Dorsolateral prefrontal cortex (tissue), 120 donors: ENCODE measurements at regions of chr2 and their contacts with region 1.

Region 1: DNA sequence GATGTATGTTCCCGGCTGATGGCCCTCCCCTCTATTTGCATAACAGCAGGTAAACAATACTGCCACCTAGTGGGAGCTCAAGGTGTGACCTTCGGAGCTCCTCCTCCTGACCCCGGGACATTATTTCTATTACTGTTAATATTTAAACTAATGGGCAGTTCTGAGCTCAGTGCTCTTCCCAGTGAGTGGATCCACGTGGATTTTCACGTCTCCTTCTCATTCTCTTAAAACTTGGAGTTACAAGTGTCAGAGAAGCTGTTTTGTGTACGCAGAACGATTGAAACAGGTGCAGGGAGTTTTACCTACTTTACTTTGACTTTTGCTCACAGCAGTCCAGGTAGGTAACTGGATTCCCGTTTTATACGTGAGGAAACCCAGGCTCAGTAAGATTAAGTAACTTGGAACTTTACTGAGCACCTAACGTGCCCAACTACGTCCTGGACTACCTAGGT is 127.3 kb downstream of the PRKCE start:
- DNase-seq: peak in 4 of 10 donors; percentile 43 to 68 (median 62)
- H3K4me3 ChIP-seq: peak overlapping the region in 7 of 59 donors; percentile 6 to 36 (median 22)
- H3K27ac ChIP-seq: no peak overlapping the region
- H3K27me3 ChIP-seq: no peaks in the 10 kb centered on the region
- CTCF ChIP-seq: peak; percentile 68 to 92 (median 82)

Region 2: GRCh38 chr2:45643543-45644542 is 134.9 kb before region 1 on chr2:
- intact Hi-C with region 1: loop called (anchors 1 to 2 kb)
- DNase-seq: peak in 9 of 10 donors; percentile 30 to 85 (median 51)
- H3K4me3 ChIP-seq: peak overlapping the region; percentile 35 to 88 (median 66)
- H3K27ac ChIP-seq: peak overlapping the region in 5 of 59 donors; percentile 27 to 76 (median 63)
- H3K27me3 ChIP-seq: peaks cover 0 to 4% (median 0%) of the 10 kb centered on the region in 45 donors
- CTCF ChIP-seq: peak; percentile 80 to 100 (median 97)

Region 3: DNA sequence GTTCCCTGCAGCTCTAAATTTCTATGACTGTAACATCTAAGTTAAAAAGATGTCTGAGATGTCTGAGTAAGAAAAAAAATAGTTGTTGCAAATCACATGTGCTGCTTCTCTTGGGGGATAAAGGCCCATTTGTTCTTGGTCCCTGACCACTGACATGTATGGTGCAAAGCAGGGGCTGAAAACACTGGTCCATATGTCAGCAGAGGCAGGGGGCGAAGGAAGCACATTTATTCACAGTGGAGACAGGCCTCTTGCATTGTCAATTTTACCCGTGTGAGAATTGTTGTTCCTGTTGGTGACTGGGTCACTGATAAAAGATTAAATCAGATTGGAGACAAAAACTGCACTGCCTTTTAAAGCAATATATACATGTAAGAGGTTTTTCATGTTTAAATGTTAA is 88.5 kb before region 1 on chr2:
- intact Hi-C with region 1: no loop called
- DNase-seq: no peak
- H3K4me3 ChIP-seq: peak overlapping the region in 2 of 59 donors; percentile 25 to 35
- H3K27ac ChIP-seq: peak overlapping the region in 42 of 59 donors; percentile 0 to 70 (median 42)
- H3K27me3 ChIP-seq: no peaks in the 10 kb centered on the region
- CTCF ChIP-seq: no peak

Region 4: DNA sequence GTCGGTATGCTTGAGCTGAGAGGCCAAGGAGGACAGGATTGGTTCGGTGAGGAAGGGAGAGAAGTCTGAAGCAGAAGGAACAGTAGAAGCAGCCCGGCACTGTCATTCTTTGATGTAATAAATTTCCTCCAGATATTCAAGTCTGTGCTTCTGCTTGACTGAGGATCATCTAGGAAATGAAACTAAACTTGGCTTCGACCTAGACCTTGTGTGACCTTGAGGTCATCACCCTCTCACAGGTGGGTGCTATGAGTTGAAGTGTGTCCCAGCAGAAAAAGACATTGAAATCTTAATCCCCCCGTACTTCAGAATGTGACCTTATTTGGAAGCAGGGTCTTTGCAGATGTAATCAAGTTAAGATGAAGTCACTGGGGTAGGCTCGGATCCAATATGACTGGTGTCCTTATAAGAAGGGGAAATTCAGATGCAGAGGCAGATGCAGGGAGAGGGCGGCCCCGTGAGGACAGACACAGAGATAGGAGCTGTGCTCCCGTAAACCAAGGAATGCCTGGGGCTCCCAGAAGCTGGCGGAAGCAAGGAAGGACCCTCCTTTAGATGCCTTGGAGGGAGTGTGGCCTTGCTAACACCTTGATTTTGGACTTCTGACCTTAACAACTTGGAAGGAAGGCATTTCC is 78.2 kb before region 1 on chr2:
- intact Hi-C with region 1: loop called in 1 of 2 experiments (anchors 10 kb)
- DNase-seq: no peak
- H3K4me3 ChIP-seq: no peak overlapping the region
- H3K27ac ChIP-seq: peak overlapping the region in 3 of 59 donors; percentile 4 to 33 (median 18)
- H3K27me3 ChIP-seq: no peaks in the 10 kb centered on the region
- CTCF ChIP-seq: no peak

Region 5: GRCh38 chr2:45821564-45822271 is 43.0 kb after region 1 on chr2:
- intact Hi-C with region 1: loop called in 1 of 2 experiments (anchors 5 kb)
- DNase-seq: peak in 1 of 10 donors; percentile 48
- H3K4me3 ChIP-seq: no peak overlapping the region
- H3K27ac ChIP-seq: peak overlapping the region in 11 of 59 donors; percentile 7 to 68 (median 39)
- H3K27me3 ChIP-seq: no peaks in the 10 kb centered on the region
- CTCF ChIP-seq: no peak

Region 6: GRCh38 chr2:45935791-45936622 is 157.3 kb after region 1 on chr2:
- intact Hi-C with region 1: loop called (anchors 2 kb)
- DNase-seq: peak; percentile 64 to 90 (median 86)
- H3K4me3 ChIP-seq: peak overlapping the region in 32 of 59 donors; percentile 1 to 46 (median 23)
- H3K27ac ChIP-seq: peak overlapping the region in 18 of 59 donors; percentile 4 to 69 (median 30)
- H3K27me3 ChIP-seq: no peaks in the 10 kb centered on the region
- CTCF ChIP-seq: peak; percentile 65 to 94 (median 85)

Region 7: GRCh38 chr2:47002480-47003381 is 1224.0 kb after region 1 on chr2:
- intact Hi-C with region 1: no loop called
- DNase-seq: peak; percentile 74 to 88 (median 81)
- H3K4me3 ChIP-seq: peak overlapping the region in 2 of 59 donors; percentile 1 to 11
- H3K27ac ChIP-seq: peak overlapping the region; percentile 21 to 99 (median 94)
- H3K27me3 ChIP-seq: no peaks in the 10 kb centered on the region
- CTCF ChIP-seq: peak in 2 of 56 donors; percentile 7 to 10